Calu3 (cell line): ENCODE measurements at regions of chrX and their contacts with region 1.

Region 1: DNA sequence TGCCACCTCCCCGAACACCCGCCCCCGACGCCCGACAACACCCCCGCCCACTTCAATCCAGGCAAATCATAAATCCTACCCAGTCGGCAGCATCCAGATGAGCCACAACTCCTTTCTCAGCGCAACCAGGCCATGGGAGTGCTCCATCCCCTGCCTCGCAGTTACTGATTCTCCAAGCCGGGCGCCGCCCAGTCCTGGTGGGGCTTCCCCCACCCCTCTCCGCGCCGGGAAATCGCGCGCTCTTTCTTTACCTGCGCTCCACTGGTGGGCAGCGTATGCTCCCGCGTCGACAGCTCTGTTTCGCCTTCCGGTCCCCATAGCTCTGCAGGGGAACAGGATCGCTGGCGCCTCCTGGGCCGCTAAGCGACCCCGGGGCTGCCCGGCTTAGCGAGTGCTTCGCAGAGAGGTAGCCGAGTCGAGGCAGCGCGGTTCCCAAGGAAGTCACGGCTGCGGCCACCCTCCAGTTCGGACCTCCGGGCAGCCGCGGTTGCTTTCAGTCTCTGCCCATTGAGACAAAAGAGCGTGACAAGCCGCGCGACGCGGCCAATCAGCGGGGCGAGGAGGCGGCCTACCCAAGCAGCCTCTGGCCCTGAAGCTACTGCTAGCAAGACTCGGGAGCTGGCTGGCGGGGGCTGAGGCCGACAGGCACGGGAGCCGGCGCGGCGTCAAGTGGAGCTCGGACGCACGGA is 43.7 kb upstream of the TMSB15B start:
- DNase-seq: peak; percentile 69
- H3K4me3 Mint-ChIP-seq: peak overlapping the region; percentile 87
- H3K27ac Mint-ChIP-seq: peak overlapping the region; percentile 17
- H3K4me1 Mint-ChIP-seq: peaks cover 25% of the 10 kb centered on the region
- H3K27me3 Mint-ChIP-seq: no peaks in the 10 kb centered on the region
- CTCF ChIP-seq: no peak

Region 2: GRCh38 chrX:103806862-103807474 is 111.8 kb before region 1 on chrX:
- CTCF ChIA-PET with region 1: no interaction called
- intact Hi-C with region 1: no loop called
- DNase-seq: no peak
- H3K4me3 Mint-ChIP-seq: no peak overlapping the region
- H3K27ac Mint-ChIP-seq: no peak overlapping the region
- H3K4me1 Mint-ChIP-seq: no peaks in the 10 kb centered on the region
- H3K27me3 Mint-ChIP-seq: peaks cover 28% of the 10 kb centered on the region
- CTCF ChIP-seq: no peak

Region 3: GRCh38 chrX:103878466-103879122 is 40.1 kb before region 1 on chrX:
- CTCF ChIA-PET with region 1: no interaction called
- intact Hi-C with region 1: loop called (anchors 5 kb)
- DNase-seq: peak; percentile 61
- H3K4me3 Mint-ChIP-seq: peak overlapping the region; percentile 39
- H3K27ac Mint-ChIP-seq: peak overlapping the region; percentile 56
- H3K4me1 Mint-ChIP-seq: peaks cover 47% of the 10 kb centered on the region
- H3K27me3 Mint-ChIP-seq: no peaks in the 10 kb centered on the region
- CTCF ChIP-seq: no peak

Region 4: GRCh38 chrX:103941201-103941975 is 22.7 kb after region 1 on chrX:
- CTCF ChIA-PET with region 1: interaction called, 3 read pairs
- intact Hi-C with region 1: loop called (anchors 2 kb)
- DNase-seq: peak; percentile 30
- H3K4me3 Mint-ChIP-seq: no peak overlapping the region
- H3K27ac Mint-ChIP-seq: no peak overlapping the region
- H3K4me1 Mint-ChIP-seq: peaks cover 12% of the 10 kb centered on the region
- H3K27me3 Mint-ChIP-seq: no peaks in the 10 kb centered on the region
- CTCF ChIP-seq: no peak